GM12878 (cell line): ENCODE measurements at regions of chr2 and their contacts with region 1.

Region 1: DNA sequence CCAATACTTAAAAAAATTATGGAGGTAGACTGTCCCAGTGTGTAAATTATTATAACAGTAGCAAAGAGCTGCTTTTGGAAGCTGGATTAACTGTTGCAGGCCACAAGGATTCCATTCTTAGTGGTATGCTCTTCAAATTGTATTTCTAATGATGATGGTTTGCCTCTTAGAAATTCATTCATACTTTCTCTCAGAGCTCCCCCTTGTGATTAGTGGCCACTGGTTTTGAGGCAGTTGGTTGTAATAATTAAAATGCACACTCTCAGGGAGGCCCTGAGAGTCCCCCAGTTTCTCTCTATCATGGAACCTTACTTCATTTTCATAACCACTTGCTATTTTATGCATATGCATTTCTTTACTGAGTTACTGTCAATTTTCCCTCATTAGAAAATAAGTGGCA is 122.5 kb downstream of the PLA2R1 start:
- DNase-seq: peak; percentile 32
- ATAC-seq: peak; percentile 94
- H3K4me3 ChIP-seq: no peak overlapping the region
- H3K27ac ChIP-seq: no peak overlapping the region
- H3K4me1 ChIP-seq: 0 out of 2 replicates have a peak, but pooled peaks cover 1% of the 10 kb centered on the region
- H3K27me3 ChIP-seq: no peaks in the 10 kb centered on the region
- CTCF ChIP-seq: peak; percentile 57 to 82 (median 62); a peak in 5 of 6 replicates
- EP300 ChIP-seq: no peak
- POLR2A ChIP-seq: no peak
- RAD21 ChIP-seq: peak; percentile 88

Region 2: GRCh38 chr2:159615140-159615951 is 324.6 kb before region 1 on chr2:
- CTCF ChIA-PET with region 1: no interaction called
- POLR2A ChIA-PET with region 1: no interaction called
- RAD21 ChIA-PET with region 1: interaction called, 3 read pairs
- SMC1A ChIA-PET with region 1: interaction called, 3 read pairs
- in situ Hi-C with region 1: no loop called
- intact Hi-C with region 1: loop called (anchors 10 kb)
- DNase-seq: peak; percentile 46
- ATAC-seq: peak; percentile 85
- H3K4me3 ChIP-seq: peak overlapping the region; percentile 70
- H3K27ac ChIP-seq: peak overlapping the region; percentile 73
- H3K4me1 ChIP-seq: no peaks in the 10 kb centered on the region; the same call in 1 of the 2 replicates
- H3K27me3 ChIP-seq: no peaks in the 10 kb centered on the region
- CTCF ChIP-seq: no peak
- EP300 ChIP-seq: no peak
- POLR2A ChIP-seq: peak; percentile 78
- RAD21 ChIP-seq: peak; percentile 25; the same call in 1 of the 2 replicates

Region 3: GRCh38 chr2:159797543-159798375 is 142.2 kb before region 1 on chr2 and contains the start of gene CD302:
- CTCF ChIA-PET with region 1: interaction called, 6 read pairs
- POLR2A ChIA-PET with region 1: no interaction called
- RAD21 ChIA-PET with region 1: no interaction called
- SMC1A ChIA-PET with region 1: interaction called, 13 read pairs
- in situ Hi-C with region 1: no loop called
- intact Hi-C with region 1: no loop called
- DNase-seq: no peak
- ATAC-seq: peak; percentile 85
- H3K4me3 ChIP-seq: peak within 1 kb of the TSS; percentile 77
- H3K27ac ChIP-seq: no peak within 1 kb of the TSS
- H3K4me1 ChIP-seq: no peaks in the 10 kb centered on the region
- H3K27me3 ChIP-seq: no peaks in the 10 kb centered on the region
- CTCF ChIP-seq: no peak
- EP300 ChIP-seq: no peak
- POLR2A ChIP-seq: peak; percentile 71
- RAD21 ChIP-seq: no peak
- polyA plus RNA-seq, gene CD302: 0.48 to 0.64 TPM

Region 4: GRCh38 chr2:159840616-159841015 is 99.3 kb before region 1 on chr2:
- CTCF ChIA-PET with region 1: interaction called, 7 read pairs
- POLR2A ChIA-PET with region 1: interaction called, 3 read pairs
- RAD21 ChIA-PET with region 1: interaction called, 16 read pairs
- SMC1A ChIA-PET with region 1: interaction called, 20 read pairs
- in situ Hi-C with region 1: no loop called
- intact Hi-C with region 1: no loop called
- DNase-seq: no peak
- ATAC-seq: no peak
- H3K4me3 ChIP-seq: no peak overlapping the region
- H3K27ac ChIP-seq: no peak overlapping the region
- H3K4me1 ChIP-seq: no peaks in the 10 kb centered on the region
- H3K27me3 ChIP-seq: no peaks in the 10 kb centered on the region
- CTCF ChIP-seq: no peak
- EP300 ChIP-seq: no peak
- POLR2A ChIP-seq: no peak
- RAD21 ChIP-seq: no peak

Region 5: DNA sequence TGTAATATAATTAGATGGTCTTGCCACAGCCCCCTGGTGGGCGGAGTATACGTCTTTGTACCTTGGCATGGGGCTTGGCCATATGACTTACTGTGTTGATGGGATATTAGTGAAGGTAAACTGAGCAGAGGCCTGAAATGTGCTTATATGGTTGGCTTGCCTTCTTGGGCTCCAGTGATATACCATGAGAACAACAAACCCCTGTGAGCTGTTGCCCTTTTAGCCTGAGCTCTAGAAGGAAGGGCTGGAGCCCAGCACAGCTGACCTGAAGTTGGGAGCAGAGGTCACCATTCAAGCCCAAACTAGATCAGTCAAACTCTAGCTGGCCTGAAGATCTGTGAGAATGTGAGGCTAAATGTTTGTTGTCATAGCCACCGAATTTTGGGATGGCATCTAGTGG is 66.7 kb before region 1 on chr2:
- CTCF ChIA-PET with region 1: interaction called, 4 read pairs
- POLR2A ChIA-PET with region 1: no interaction called
- RAD21 ChIA-PET with region 1: interaction called, 14 read pairs
- SMC1A ChIA-PET with region 1: interaction called, 12 read pairs
- in situ Hi-C with region 1: no loop called
- intact Hi-C with region 1: no loop called
- DNase-seq: no peak
- ATAC-seq: peak; percentile 30
- H3K4me3 ChIP-seq: no peak overlapping the region
- H3K27ac ChIP-seq: no peak overlapping the region
- H3K4me1 ChIP-seq: no peaks in the 10 kb centered on the region
- H3K27me3 ChIP-seq: no peaks in the 10 kb centered on the region
- CTCF ChIP-seq: no peak
- EP300 ChIP-seq: no peak
- POLR2A ChIP-seq: no peak
- RAD21 ChIP-seq: no peak

Region 6: GRCh38 chr2:159921752-159922404 is 18.1 kb before region 1 on chr2:
- CTCF ChIA-PET with region 1: interaction called, 68 read pairs
- POLR2A ChIA-PET with region 1: interaction called, 5 read pairs
- RAD21 ChIA-PET with region 1: interaction called, 45 read pairs
- SMC1A ChIA-PET with region 1: interaction called, 1,536 read pairs
- in situ Hi-C with region 1: no loop called
- intact Hi-C with region 1: no loop called
- DNase-seq: no peak
- ATAC-seq: peak; percentile 97
- H3K4me3 ChIP-seq: 0 out of 2 replicates have a peak overlapping the region, but pooled peaks have one; percentile 16
- H3K27ac ChIP-seq: peak overlapping the region; percentile 4
- H3K4me1 ChIP-seq: peaks cover 13% of the 10 kb centered on the region
- H3K27me3 ChIP-seq: no peaks in the 10 kb centered on the region
- CTCF ChIP-seq: peak; percentile 91 to 96 (median 95)
- EP300 ChIP-seq: no peak
- POLR2A ChIP-seq: peak; percentile 35; the same call in 1 of the 2 replicates
- RAD21 ChIP-seq: peak; percentile 76

Region 7: GRCh38 chr2:160156096-160156495 is 216.2 kb after region 1 on chr2:
- CTCF ChIA-PET with region 1: no interaction called
- POLR2A ChIA-PET with region 1: no interaction called
- RAD21 ChIA-PET with region 1: no interaction called
- SMC1A ChIA-PET with region 1: no interaction called
- in situ Hi-C with region 1: no loop called
- intact Hi-C with region 1: no loop called
- DNase-seq: no peak
- ATAC-seq: no peak
- H3K4me3 ChIP-seq: no peak overlapping the region
- H3K27ac ChIP-seq: no peak overlapping the region
- H3K4me1 ChIP-seq: no peaks in the 10 kb centered on the region
- H3K27me3 ChIP-seq: no peaks in the 10 kb centered on the region
- CTCF ChIP-seq: no peak
- EP300 ChIP-seq: no peak
- POLR2A ChIP-seq: no peak
- RAD21 ChIP-seq: no peak